ENCODE measurements at regions of chr1 and their contacts with region 1.

Region 1: GRCh38 chr1:197180252-197180878 is 33.9 kb upstream of the ASPM start:
- DNase-seq: no peak
- H3K4me3 ChIP-seq: no peak overlapping the region
- H3K27ac ChIP-seq: no peak overlapping the region
- H3K4me1 ChIP-seq: peaks cover 0 to 23% (median 0%) of the 10 kb centered on the region in 6 donors
- H3K27me3 ChIP-seq: no peaks in the 10 kb centered on the region
- CTCF ChIP-seq: peak in 8 of 11 experiments; percentile 23 to 60 (median 43)
- POLR2A ChIP-seq: no peak

Region 2: GRCh38 chr1:197356723-197357533 is 176.6 kb after region 1 on chr1:
- intact Hi-C with region 1: loop called (anchors 5 kb)
- DNase-seq: no peak
- H3K4me3 ChIP-seq: no peak overlapping the region
- H3K27ac ChIP-seq: no peak overlapping the region
- H3K4me1 ChIP-seq: no peaks in the 10 kb centered on the region
- H3K27me3 ChIP-seq: no peaks in the 10 kb centered on the region
- CTCF ChIP-seq: peak in 7 of 11 experiments; percentile 35 to 53 (median 44)
- POLR2A ChIP-seq: no peak

Region 3: GRCh38 chr1:197595304-197595904 is 415.0 kb after region 1 on chr1:
- intact Hi-C with region 1: no loop called
- DNase-seq: no peak
- H3K4me3 ChIP-seq: no peak overlapping the region
- H3K27ac ChIP-seq: no peak overlapping the region
- H3K4me1 ChIP-seq: no peaks in the 10 kb centered on the region
- H3K27me3 ChIP-seq: no peaks in the 10 kb centered on the region
- CTCF ChIP-seq: no peak
- POLR2A ChIP-seq: no peak